GM10248 (cell line): ENCODE measurements at regions of chr5 and their contacts with region 1.

Region 1: GRCh38 chr5:172059661-172060100 is 53.2 kb upstream of the FBXW11 start:
- DNase-seq: no peak
- CTCF ChIP-seq: peak; percentile 49

Region 2: GRCh38 chr5:172006321-172007174 is 53.1 kb before region 1 on chr5 and contains the start of gene FBXW11:
- CTCF ChIA-PET with region 1: interaction called, 7 read pairs
- POLR2A ChIA-PET with region 1: interaction called, 14 read pairs
- DNase-seq: peak; percentile 96
- CTCF ChIP-seq: no peak

Region 3: DNA sequence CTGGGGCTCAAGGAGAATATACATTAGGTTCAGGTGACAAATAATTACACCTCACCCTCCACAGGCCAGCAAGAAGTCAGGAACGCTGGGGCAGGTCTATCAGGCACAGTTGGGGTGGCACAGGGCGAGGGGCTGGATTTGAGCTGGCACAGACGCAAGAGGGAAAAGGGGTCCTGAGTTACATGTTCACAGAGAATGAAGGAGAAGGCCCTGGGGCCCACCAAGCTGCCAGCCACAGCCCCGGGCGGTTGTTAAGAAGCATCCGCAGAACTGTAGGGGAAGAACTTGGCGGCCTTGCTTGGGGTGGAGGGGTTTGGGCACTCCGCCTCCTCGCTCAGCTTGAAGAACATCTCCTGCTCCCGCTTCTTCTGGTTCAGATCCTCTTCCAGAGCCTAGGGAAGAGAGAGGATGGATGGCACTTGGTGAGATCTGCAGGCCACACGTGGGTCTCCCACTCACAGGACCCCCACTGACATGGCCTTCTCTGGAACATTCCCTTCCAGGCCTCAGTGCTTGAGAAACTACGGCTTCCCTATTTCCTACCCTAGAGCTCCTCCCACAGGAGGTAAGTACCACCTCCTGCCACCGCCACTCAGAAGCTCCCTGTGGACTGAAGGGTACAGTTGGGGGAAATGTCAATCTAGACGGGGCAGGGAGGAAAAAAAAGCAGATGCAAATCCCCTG is 14.9 kb before region 1 on chr5:
- CTCF ChIA-PET with region 1: interaction called, 11 read pairs
- POLR2A ChIA-PET with region 1: no interaction called
- DNase-seq: no peak
- CTCF ChIP-seq: no peak

Region 4: DNA sequence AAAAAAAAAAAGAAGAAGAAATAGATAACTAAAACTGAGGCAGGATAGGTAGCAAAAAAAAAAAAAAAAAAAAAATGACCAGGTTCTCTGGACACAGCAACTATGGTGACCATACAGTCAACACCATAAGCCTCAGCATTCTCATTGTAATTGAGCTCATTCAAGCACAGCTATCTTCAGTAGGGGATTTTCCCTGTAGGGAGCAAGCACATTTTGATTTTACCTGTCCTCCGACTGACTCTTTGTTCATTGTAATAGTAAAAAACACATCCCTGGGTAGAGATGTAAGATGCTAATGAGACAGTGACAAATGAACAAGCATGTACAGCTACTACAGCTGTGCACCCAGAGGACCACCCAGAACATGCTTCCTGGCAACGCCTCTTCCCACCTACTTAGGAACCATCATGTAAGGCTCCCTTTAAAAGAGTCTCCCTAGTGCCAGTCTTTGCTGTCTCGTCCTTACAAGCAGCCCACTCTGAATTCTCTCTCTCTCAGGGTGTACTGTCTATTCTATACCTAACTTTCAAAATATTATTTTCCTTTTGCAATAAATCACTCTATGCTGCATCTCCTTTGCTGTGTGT is 11.7 kb after region 1 on chr5:
- CTCF ChIA-PET with region 1: interaction called, 19 read pairs
- POLR2A ChIA-PET with region 1: no interaction called
- DNase-seq: no peak
- CTCF ChIP-seq: no peak

Region 5: DNA sequence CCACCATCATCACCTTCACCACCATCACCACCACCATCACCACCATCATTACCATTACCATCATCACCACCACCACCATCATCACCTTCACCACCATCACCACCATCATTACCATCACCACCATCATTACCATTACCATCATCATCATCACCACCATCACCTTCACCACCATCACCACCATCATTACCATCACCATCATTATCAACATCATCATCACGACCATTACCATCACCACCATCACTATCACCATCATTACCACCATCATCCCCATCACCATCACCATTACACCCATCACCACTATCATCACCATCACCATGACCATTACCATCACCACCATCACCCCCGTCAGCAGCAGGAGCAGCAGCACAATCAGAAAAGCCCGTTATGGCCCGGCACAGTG is 39.2 kb after region 1 on chr5:
- CTCF ChIA-PET with region 1: no interaction called
- POLR2A ChIA-PET with region 1: no interaction called
- DNase-seq: no peak
- CTCF ChIP-seq: no peak

Region 6: GRCh38 chr5:172123269-172123692 is 63.6 kb after region 1 on chr5:
- CTCF ChIA-PET with region 1: no interaction called
- POLR2A ChIA-PET with region 1: no interaction called
- DNase-seq: no peak
- CTCF ChIP-seq: no peak